Naive thymus-derived CD4-positive, alpha-beta T cell (primary cell): ENCODE measurements at regions of chr15 and their contacts with region 1.

Region 1: GRCh38 chr15:69475769-69476358 is 23.2 kb downstream of the RPLP1 start:
- DNase-seq: peak; percentile 39 to 77 (median 63)
- ATAC-seq: peak; percentile 90
- H3K4me3 ChIP-seq: no peak overlapping the region
- H3K4me3 Mint-ChIP-seq: no peak overlapping the region
- H3K27ac ChIP-seq: no peak overlapping the region
- H3K27ac Mint-ChIP-seq: no peak overlapping the region
- H3K4me1 ChIP-seq: no peaks in the 10 kb centered on the region
- H3K4me1 Mint-ChIP-seq: peaks cover 0 to 5% (median 0%) of the 10 kb centered on the region in 7 donors
- H3K27me3 ChIP-seq: no peaks in the 10 kb centered on the region
- H3K27me3 Mint-ChIP-seq: peaks cover 0 to 29% (median 0%) of the 10 kb centered on the region in 5 donors

Region 2: GRCh38 chr15:69434236-69434635 is 41.6 kb before region 1 on chr15:
- CTCF ChIA-PET with region 1: no interaction called
- POLR2A ChIA-PET with region 1: no interaction called
- intact Hi-C with region 1: no loop called
- DNase-seq: no peak
- ATAC-seq: no peak
- H3K4me3 ChIP-seq: no peak overlapping the region
- H3K4me3 Mint-ChIP-seq: no peak overlapping the region
- H3K27ac ChIP-seq: no peak overlapping the region
- H3K27ac Mint-ChIP-seq: no peak overlapping the region
- H3K4me1 ChIP-seq: no peaks in the 10 kb centered on the region
- H3K4me1 Mint-ChIP-seq: peaks cover 0 to 2% (median 0%) of the 10 kb centered on the region in 7 donors
- H3K27me3 ChIP-seq: no peaks in the 10 kb centered on the region
- H3K27me3 Mint-ChIP-seq: no peaks in the 10 kb centered on the region

Region 3: DNA sequence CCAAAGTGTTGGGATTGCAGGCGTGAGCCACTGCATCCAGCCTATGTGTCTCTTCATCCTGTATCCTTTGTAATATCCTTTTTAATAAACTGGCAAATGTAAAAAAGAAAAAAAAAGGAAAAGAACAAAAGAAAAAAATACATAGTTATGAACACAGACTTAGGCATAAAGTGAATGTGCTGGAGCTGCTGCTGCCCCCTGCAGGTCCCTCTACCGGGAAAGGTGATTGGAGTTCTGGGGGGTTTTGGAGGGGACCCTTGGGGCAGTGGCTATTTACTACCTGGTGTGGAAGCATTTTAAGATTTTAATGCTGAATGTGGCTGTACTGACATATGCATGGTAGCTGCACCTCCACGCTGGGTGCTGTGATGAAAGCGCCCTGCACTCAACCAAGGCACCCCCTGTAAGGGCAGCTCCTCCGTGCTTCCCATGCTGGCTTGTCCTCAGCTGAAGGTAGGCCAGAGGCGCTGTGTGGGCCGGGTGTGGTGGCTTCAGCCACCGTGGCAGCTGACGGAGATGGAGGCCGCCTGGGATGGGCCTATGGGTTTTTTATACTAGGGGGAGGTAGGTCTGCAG is 26.7 kb after region 1 on chr15:
- CTCF ChIA-PET with region 1: no interaction called
- POLR2A ChIA-PET with region 1: no interaction called
- intact Hi-C with region 1: no loop called
- DNase-seq: no peak
- ATAC-seq: no peak
- H3K4me3 ChIP-seq: no peak overlapping the region
- H3K4me3 Mint-ChIP-seq: no peak overlapping the region
- H3K27ac ChIP-seq: no peak overlapping the region
- H3K27ac Mint-ChIP-seq: no peak overlapping the region
- H3K4me1 ChIP-seq: no peaks in the 10 kb centered on the region
- H3K4me1 Mint-ChIP-seq: peaks cover 0 to 15% (median 0%) of the 10 kb centered on the region in 7 donors
- H3K27me3 ChIP-seq: no peaks in the 10 kb centered on the region
- H3K27me3 Mint-ChIP-seq: no peaks in the 10 kb centered on the region

Region 4: GRCh38 chr15:69576035-69576526 is 100.2 kb after region 1 on chr15:
- CTCF ChIA-PET with region 1: no interaction called
- POLR2A ChIA-PET with region 1: no interaction called
- intact Hi-C with region 1: loop called (anchors 5 kb)
- DNase-seq: peak; percentile 38 to 69 (median 58)
- ATAC-seq: peak; percentile 87
- H3K4me3 ChIP-seq: no peak overlapping the region
- H3K4me3 Mint-ChIP-seq: no peak overlapping the region
- H3K27ac ChIP-seq: no peak overlapping the region
- H3K27ac Mint-ChIP-seq: peak overlapping the region in 3 of 9 donors; percentile 23 to 38 (median 24)
- H3K4me1 ChIP-seq: peaks cover 7 to 9% of the 10 kb centered on the region in 2 donors
- H3K4me1 Mint-ChIP-seq: peaks cover 14 to 44% (median 30%) of the 10 kb centered on the region in 7 donors
- H3K27me3 ChIP-seq: no peaks in the 10 kb centered on the region
- H3K27me3 Mint-ChIP-seq: peaks cover 0 to 11% (median 0%) of the 10 kb centered on the region in 5 donors

Region 5: DNA sequence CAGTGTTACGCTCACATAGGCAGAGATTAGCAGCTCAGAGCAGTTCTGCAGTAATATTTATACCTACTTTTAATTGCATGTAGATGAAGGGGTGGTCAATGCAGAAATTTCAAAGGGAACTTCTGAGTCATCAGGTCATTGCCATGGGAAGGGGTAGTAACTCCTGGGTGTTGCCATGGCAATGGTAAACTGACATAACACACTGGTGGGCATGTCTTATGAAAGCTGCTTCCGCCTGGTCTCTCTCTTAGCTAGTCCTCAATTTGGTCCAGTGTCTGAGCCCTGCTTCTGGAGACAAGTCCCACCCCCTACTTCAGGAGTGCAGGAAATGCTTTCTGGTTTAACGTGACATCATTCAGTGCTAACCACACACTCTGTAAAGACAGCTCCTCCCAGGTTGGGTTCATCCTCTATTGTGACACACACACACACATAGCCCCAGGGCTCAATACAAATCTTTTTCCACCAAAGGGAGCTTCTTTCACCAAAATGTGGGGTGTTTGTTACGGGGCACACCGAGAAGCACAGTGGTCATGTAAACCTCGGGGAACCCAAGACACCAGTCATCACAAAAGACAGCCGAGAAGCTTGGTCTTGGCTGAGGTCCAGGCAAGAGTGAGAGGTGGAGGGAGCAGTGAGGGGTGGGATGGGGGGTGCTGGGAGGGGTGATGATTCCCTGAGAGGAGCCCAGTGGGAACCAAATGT is 547.4 kb after region 1 on chr15:
- CTCF ChIA-PET with region 1: no interaction called
- POLR2A ChIA-PET with region 1: no interaction called
- intact Hi-C with region 1: loop called in 1 of 2 experiments (anchors 5 kb)
- DNase-seq: peak in 8 of 9 donors; percentile 32 to 65 (median 46)
- ATAC-seq: peak; percentile 95
- H3K4me3 ChIP-seq: no peak overlapping the region
- H3K4me3 Mint-ChIP-seq: peak overlapping the region in 3 of 10 donors; percentile 42 to 80 (median 43)
- H3K27ac ChIP-seq: no peak overlapping the region
- H3K27ac Mint-ChIP-seq: peak overlapping the region in 6 of 9 donors; percentile 23 to 89 (median 56)
- H3K4me1 ChIP-seq: peaks cover 10 to 17% of the 10 kb centered on the region in 2 donors
- H3K4me1 Mint-ChIP-seq: peaks cover 9 to 26% (median 14%) of the 10 kb centered on the region in 7 donors
- H3K27me3 ChIP-seq: no peaks in the 10 kb centered on the region
- H3K27me3 Mint-ChIP-seq: peaks cover 0 to 26% (median 0%) of the 10 kb centered on the region in 5 donors

Region 6: GRCh38 chr15:70466895-70467529 is 991.1 kb after region 1 on chr15:
- CTCF ChIA-PET with region 1: interaction called, 13 read pairs
- POLR2A ChIA-PET with region 1: no interaction called
- intact Hi-C with region 1: loop called (anchors 1 to 2 kb)
- DNase-seq: peak in 6 of 9 donors; percentile 20 to 61 (median 54)
- ATAC-seq: peak; percentile 57
- H3K4me3 ChIP-seq: no peak overlapping the region
- H3K4me3 Mint-ChIP-seq: no peak overlapping the region
- H3K27ac ChIP-seq: no peak overlapping the region
- H3K27ac Mint-ChIP-seq: peak overlapping the region in 1 of 9 donors; percentile 3
- H3K4me1 ChIP-seq: no peaks in the 10 kb centered on the region
- H3K4me1 Mint-ChIP-seq: peaks cover 0 to 13% (median 6%) of the 10 kb centered on the region in 7 donors
- H3K27me3 ChIP-seq: no peaks in the 10 kb centered on the region
- H3K27me3 Mint-ChIP-seq: peaks cover 0 to 81% (median 4%) of the 10 kb centered on the region in 5 donors

Region 7: GRCh38 chr15:70584838-70585706 is 1109.2 kb after region 1 on chr15:
- CTCF ChIA-PET with region 1: no interaction called
- POLR2A ChIA-PET with region 1: no interaction called
- intact Hi-C with region 1: loop called in 1 of 2 experiments (anchors 5 kb)
- DNase-seq: peak; percentile 35 to 66 (median 52)
- ATAC-seq: peak; percentile 88
- H3K4me3 ChIP-seq: no peak overlapping the region
- H3K4me3 Mint-ChIP-seq: peak overlapping the region in 9 of 10 donors; percentile 42 to 84 (median 71)
- H3K27ac ChIP-seq: no peak overlapping the region
- H3K27ac Mint-ChIP-seq: peak overlapping the region in 1 of 9 donors; percentile 49
- H3K4me1 ChIP-seq: peaks cover 0 to 9% of the 10 kb centered on the region in 2 donors
- H3K4me1 Mint-ChIP-seq: peaks cover 0 to 28% (median 20%) of the 10 kb centered on the region in 7 donors
- H3K27me3 ChIP-seq: no peaks in the 10 kb centered on the region
- H3K27me3 Mint-ChIP-seq: peaks cover 0 to 36% (median 17%) of the 10 kb centered on the region in 5 donors

Region 8: GRCh38 chr15:70810916-70811578 is 1335.2 kb after region 1 on chr15:
- CTCF ChIA-PET with region 1: interaction called, 3 read pairs
- POLR2A ChIA-PET with region 1: no interaction called
- intact Hi-C with region 1: loop called (anchors 1 to 5 kb)
- DNase-seq: no peak
- ATAC-seq: no peak
- H3K4me3 ChIP-seq: no peak overlapping the region
- H3K4me3 Mint-ChIP-seq: no peak overlapping the region
- H3K27ac ChIP-seq: no peak overlapping the region
- H3K27ac Mint-ChIP-seq: no peak overlapping the region
- H3K4me1 ChIP-seq: no peaks in the 10 kb centered on the region
- H3K4me1 Mint-ChIP-seq: peaks cover 0 to 13% (median 9%) of the 10 kb centered on the region in 7 donors
- H3K27me3 ChIP-seq: no peaks in the 10 kb centered on the region
- H3K27me3 Mint-ChIP-seq: peaks cover 0 to 11% (median 6%) of the 10 kb centered on the region in 5 donors